Endothelial cell of umbilical vein (primary cell): ENCODE measurements at regions of chr11 and their contacts with region 1.

Region 1: GRCh38 chr11:96342961-96343711 is at the start of gene MAML2:
- DNase-seq: peak; percentile 91
- H3K4me3 ChIP-seq: peak within 1 kb of the TSS; percentile 59 to 98 (median 94)
- H3K27ac ChIP-seq: peak within 1 kb of the TSS; percentile 88
- H3K4me1 ChIP-seq: peaks cover 30% of the 10 kb centered on the region
- H3K27me3 ChIP-seq: no peaks in the 10 kb centered on the region
- CTCF ChIP-seq: peak; percentile 76 to 96
- POLR2A ChIP-seq: no peak
- total RNA-seq, gene MAML2: 16.8 and 17.1 TPM in 2 replicates

Region 2: GRCh38 chr11:95805869-95806268 is 537.3 kb before region 1 on chr11:
- CTCF ChIA-PET with region 1: no interaction called
- POLR2A ChIA-PET with region 1: no interaction called
- dilution Hi-C with region 1: no loop called
- intact Hi-C with region 1: no loop called
- DNase-seq: no peak
- H3K4me3 ChIP-seq: no peak overlapping the region
- H3K27ac ChIP-seq: no peak overlapping the region
- H3K4me1 ChIP-seq: no peaks in the 10 kb centered on the region
- H3K27me3 ChIP-seq: no peaks in the 10 kb centered on the region
- CTCF ChIP-seq: no peak
- POLR2A ChIP-seq: no peak

Region 3: GRCh38 chr11:95923728-95924413 is 419.3 kb before region 1 on chr11 and contains the start of gene MTMR2:
- CTCF ChIA-PET with region 1: interaction called, 11 read pairs
- POLR2A ChIA-PET with region 1: interaction called, 3 read pairs
- dilution Hi-C with region 1: no loop called
- intact Hi-C with region 1: loop called (anchors 2 kb)
- DNase-seq: peak; percentile 82
- H3K4me3 ChIP-seq: peak within 1 kb of the TSS; percentile 92 to 99 (median 98)
- H3K27ac ChIP-seq: peak within 1 kb of the TSS; percentile 75
- H3K4me1 ChIP-seq: peaks cover 32% of the 10 kb centered on the region
- H3K27me3 ChIP-seq: no peaks in the 10 kb centered on the region
- CTCF ChIP-seq: no peak
- POLR2A ChIP-seq: peak; percentile 97
- total RNA-seq, gene MTMR2: 46.4 and 49.5 TPM in 2 replicates

Region 4: GRCh38 chr11:96082002-96082899 is 260.9 kb before region 1 on chr11:
- CTCF ChIA-PET with region 1: interaction called, 13 read pairs
- POLR2A ChIA-PET with region 1: no interaction called
- dilution Hi-C with region 1: no loop called
- intact Hi-C with region 1: no loop called
- DNase-seq: peak; percentile 42
- H3K4me3 ChIP-seq: no peak overlapping the region
- H3K27ac ChIP-seq: no peak overlapping the region
- H3K4me1 ChIP-seq: peaks cover 12% of the 10 kb centered on the region
- H3K27me3 ChIP-seq: no peaks in the 10 kb centered on the region
- CTCF ChIP-seq: no peak
- POLR2A ChIP-seq: no peak

Region 5: DNA sequence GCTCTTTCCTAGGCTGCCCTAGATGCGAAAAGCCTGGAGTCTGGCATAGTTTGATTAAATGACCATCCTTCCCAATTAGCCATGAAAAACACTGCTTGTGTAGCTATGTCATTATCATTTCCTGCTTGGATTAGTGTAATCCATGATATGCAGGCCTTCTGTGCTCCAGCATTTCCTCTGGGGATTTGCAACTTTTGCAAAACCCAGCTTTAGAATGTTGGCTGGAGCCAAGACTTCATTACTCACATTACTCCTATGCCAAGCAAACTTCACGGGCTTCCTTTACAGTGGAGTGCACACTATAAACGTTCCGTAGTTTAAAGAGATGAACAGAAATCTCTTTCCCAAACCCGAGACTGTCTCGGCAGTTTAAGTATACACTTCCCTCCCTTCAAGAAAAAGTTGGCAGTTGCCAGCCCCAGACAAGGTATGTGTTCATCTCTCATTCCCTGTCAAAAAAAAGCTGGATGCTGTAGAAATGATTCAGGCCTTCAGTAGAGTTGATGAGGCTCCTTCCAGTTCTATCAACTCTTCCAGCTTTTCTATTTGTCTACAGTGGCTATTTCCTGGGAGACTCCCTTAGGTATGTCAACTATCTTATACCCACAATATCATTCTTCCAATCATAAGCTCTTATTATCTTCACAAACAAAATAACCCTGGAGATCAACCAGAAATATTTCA is 180.2 kb before region 1 on chr11:
- CTCF ChIA-PET with region 1: interaction called, 33 read pairs
- POLR2A ChIA-PET with region 1: interaction called, 9 read pairs
- dilution Hi-C with region 1: no loop called
- intact Hi-C with region 1: no loop called
- DNase-seq: peak; percentile 93
- H3K4me3 ChIP-seq: no peak overlapping the region
- H3K27ac ChIP-seq: peak overlapping the region; percentile 80
- H3K4me1 ChIP-seq: peaks cover 31% of the 10 kb centered on the region
- H3K27me3 ChIP-seq: no peaks in the 10 kb centered on the region
- CTCF ChIP-seq: no peak
- POLR2A ChIP-seq: no peak

Region 6: DNA sequence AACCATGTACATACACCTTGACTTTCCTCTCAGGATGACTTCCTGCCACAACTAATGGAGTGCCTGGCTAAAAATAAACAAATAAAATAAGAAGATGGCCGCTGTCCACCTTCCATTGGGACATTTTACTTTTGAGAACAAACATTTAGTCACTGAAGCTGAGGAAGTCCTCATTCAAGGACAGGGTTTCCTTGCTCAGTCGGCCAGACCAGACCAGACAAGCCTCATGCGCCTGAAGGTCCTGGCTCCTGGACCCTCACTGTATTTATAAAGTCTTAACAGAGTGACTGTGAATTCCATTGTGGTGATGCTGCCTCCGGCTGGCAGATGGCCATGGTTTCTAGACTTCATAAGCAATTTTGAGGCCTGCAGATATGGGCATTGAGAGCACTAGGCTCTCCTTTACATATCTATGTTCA is 114.7 kb before region 1 on chr11:
- CTCF ChIA-PET with region 1: interaction called, 62 read pairs
- POLR2A ChIA-PET with region 1: no interaction called
- dilution Hi-C with region 1: no loop called
- intact Hi-C with region 1: loop called (anchors 1 kb)
- DNase-seq: peak; percentile 96
- H3K4me3 ChIP-seq: peak overlapping the region in 1 of 3 experiments; percentile 9
- H3K27ac ChIP-seq: peak overlapping the region; percentile 98
- H3K4me1 ChIP-seq: peaks cover 50% of the 10 kb centered on the region
- H3K27me3 ChIP-seq: no peaks in the 10 kb centered on the region
- CTCF ChIP-seq: no peak
- POLR2A ChIP-seq: no peak

Region 7: DNA sequence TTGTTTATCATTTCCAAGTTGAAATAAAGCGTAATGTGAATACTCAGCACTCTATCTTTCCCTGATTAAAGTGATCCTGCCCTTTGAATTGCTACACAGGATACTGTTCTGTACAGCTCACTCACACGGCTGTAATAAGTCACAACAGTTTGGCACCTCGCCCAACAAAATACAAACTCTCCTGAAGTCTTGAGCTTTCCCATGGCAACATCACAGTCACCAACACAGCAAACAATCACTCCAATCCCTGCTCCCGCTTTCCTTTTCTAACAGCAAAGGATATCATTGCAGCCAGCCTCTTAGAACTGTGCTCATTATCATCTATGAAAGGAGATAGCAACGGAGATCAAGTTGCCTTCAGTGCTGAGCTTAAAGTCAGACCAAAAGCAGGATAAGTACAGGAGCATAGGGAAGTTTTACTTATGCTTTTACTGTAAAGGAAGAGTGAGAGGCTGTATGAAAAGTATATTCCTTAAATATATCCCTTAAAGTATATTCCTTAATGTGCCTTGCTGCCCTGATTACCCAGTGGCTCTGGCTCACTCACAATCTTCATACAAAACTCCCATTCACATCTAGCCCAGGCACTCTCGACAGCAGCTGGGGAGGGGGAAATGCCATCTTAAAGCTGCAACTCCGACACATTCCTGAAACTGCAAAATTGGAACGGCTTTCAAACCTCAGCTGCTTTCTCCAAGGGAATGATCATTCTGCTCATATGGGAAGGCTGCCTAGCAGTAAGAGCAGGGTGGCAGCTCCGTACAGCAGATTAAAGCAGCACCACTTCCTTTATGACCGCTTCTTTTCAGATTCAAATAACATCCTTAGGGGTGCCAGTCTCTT is 36.0 kb before region 1 on chr11:
- CTCF ChIA-PET with region 1: interaction called, 156 read pairs
- POLR2A ChIA-PET with region 1: interaction called, 4 read pairs
- dilution Hi-C with region 1: no loop called
- intact Hi-C with region 1: loop called (anchors 1 kb)
- DNase-seq: peak; percentile 99
- H3K4me3 ChIP-seq: peak overlapping the region in 2 of 3 experiments; percentile 8 to 24
- H3K27ac ChIP-seq: peak overlapping the region; percentile 98
- H3K4me1 ChIP-seq: peaks cover 84% of the 10 kb centered on the region
- H3K27me3 ChIP-seq: no peaks in the 10 kb centered on the region
- CTCF ChIP-seq: no peak
- POLR2A ChIP-seq: peak; percentile 52

Region 8: GRCh38 chr11:96412761-96413381 is 69.7 kb after region 1 on chr11:
- CTCF ChIA-PET with region 1: no interaction called
- POLR2A ChIA-PET with region 1: no interaction called
- dilution Hi-C with region 1: no loop called
- intact Hi-C with region 1: no loop called
- DNase-seq: no peak
- H3K4me3 ChIP-seq: no peak overlapping the region
- H3K27ac ChIP-seq: no peak overlapping the region
- H3K4me1 ChIP-seq: no peaks in the 10 kb centered on the region
- H3K27me3 ChIP-seq: peaks cover 3 to 9% of the 10 kb centered on the region in 2 experiments
- CTCF ChIP-seq: no peak
- POLR2A ChIP-seq: no peak

Region 9: GRCh38 chr11:96486894-96487595 is 143.9 kb after region 1 on chr11:
- CTCF ChIA-PET with region 1: no interaction called
- POLR2A ChIA-PET with region 1: no interaction called
- dilution Hi-C with region 1: no loop called
- intact Hi-C with region 1: no loop called
- DNase-seq: no peak
- H3K4me3 ChIP-seq: no peak overlapping the region
- H3K27ac ChIP-seq: no peak overlapping the region
- H3K4me1 ChIP-seq: no peaks in the 10 kb centered on the region
- H3K27me3 ChIP-seq: no peaks in the 10 kb centered on the region
- CTCF ChIP-seq: no peak
- POLR2A ChIP-seq: no peak